ENCODE measurements at regions of chr2 and their contacts with region 1.

Region 1: DNA sequence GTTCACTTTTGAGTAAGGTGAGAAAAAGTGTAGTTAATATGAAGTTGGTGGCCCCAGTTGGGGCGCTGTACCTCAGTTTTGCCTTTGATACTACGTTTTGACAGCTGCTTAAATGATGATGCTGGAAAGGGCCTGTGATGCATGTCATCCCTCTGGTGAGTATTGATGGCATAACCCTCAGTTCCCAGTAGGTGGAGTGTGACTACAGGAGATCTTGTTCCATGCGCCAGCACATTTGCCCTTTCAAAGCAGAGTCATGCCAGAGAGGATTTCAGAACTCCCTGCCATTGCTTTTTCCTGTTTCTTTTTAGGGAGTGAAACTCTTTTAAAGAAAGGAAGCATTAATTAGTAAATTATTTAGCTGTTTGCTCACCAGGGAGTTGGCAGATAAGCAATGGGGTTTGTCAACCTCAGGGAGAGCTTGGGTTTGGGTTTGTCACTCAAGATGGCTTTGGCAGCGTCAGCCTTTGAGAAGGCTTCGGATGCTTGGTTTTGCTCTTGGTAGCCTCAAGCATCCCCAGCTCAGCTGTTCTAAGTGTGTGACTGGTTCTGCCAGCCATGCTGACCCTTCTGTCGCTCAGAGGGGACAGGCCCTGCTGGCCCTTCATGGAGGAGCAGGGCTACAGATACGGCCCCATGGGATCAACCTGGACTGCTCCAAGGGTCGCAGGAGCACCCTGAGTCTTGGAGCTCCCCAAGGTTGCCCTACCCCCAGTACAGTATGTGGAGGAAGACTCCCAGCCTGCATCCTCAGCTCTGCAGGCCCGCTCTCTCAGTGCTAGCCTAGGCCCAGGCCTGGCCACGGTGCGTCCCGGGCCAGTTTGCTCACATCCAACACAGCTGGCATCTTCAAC is 29.1 kb downstream of the ARMC9 start:
- DNase-seq: peak in 1 of 2 experiments; percentile 29
- H3K4me3 ChIP-seq: no peak overlapping the region
- H3K27ac ChIP-seq: no peak overlapping the region
- H3K4me1 ChIP-seq: peaks cover 0 to 7% (median 4%) of the 10 kb centered on the region in 4 experiments
- H3K27me3 ChIP-seq: no peaks in the 10 kb centered on the region
- CTCF ChIP-seq: peak; percentile 65 to 91 (median 89)
- EP300 ChIP-seq: no peak
- POLR2A ChIP-seq: no peak
- RAD21 ChIP-seq: peak; percentile 95 to 96

Region 2: DNA sequence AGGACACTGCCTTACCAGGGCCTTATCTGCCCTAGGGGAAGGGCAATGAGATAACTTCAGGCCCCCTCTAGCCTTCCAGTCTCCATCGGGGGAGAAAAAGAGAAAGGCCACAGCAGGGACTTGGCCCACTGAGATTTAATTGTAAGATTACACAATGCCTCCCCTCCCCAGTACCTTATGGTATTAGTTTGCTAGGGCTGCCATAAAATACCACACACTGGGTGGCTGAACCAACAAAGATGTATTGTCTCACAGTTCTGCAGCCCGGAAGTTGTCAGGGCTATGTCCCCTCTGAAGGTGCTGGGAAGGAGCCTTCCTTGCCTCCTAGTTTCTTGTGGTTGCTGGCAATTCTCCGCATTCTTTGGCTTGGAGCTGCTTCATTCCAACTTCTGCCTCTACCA is 266.4 kb before region 1 on chr2:
- CTCF ChIA-PET with region 1: no interaction called
- POLR2A ChIA-PET with region 1: no interaction called
- DNase-seq: no peak
- H3K4me3 ChIP-seq: no peak overlapping the region
- H3K27ac ChIP-seq: no peak overlapping the region
- H3K4me1 ChIP-seq: peaks cover 0 to 3% (median under 1%) of the 10 kb centered on the region in 4 experiments; a peak in 3 of 7 replicates
- H3K27me3 ChIP-seq: peaks cover 0 to 5% (median 2%) of the 10 kb centered on the region in 4 experiments; a peak in 4 of 7 replicates
- CTCF ChIP-seq: no peak
- EP300 ChIP-seq: no peak
- POLR2A ChIP-seq: no peak
- RAD21 ChIP-seq: no peak

Region 3: DNA sequence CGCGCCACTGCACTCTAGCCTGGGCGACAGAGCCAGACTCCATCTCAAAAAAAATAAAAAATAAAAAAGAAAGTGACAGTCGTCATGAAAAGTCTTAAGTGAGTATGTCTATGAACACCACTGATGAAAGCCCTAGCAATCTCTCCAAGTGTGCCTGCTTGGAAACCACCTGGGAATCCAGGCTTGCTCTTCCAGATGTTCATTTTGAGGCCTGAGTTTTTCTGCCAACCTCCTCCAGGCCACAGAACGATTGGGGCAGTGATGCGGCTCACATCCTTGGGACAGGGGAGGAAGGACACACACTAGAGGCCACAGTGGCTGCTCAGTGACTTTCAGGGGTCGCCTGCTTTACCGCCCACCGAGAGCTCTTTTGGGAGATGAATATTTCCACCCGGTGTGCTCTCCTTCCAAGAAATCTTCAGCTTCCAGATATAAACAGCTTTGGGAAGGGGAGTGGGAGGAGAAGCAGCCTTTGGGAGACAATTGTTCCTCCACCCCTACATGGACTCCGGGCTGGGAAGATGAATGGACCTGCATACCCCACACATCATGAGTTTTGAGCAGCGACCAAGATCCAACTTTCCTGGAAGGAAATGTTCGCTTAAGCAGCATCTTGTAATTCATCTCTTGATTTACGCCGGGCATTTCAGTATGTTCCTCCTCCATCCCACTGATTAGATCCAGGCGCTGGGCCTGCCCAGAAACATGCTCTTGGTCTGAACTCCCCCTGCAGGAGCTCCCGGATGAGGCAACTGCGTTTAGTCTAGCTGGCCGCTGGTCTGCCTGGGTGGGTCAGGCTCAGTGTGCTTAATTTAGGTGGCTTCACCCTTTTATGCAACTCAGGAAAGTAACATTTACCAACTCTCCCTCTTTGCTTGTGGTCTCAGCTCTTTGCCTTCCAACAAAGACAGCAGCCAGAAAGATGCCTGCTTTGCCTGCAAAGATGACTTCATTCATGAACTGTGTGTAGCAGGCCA is 35.4 kb before region 1 on chr2:
- CTCF ChIA-PET with region 1: interaction called, 11 read pairs
- POLR2A ChIA-PET with region 1: no interaction called
- DNase-seq: peak; percentile 64 to 79
- H3K4me3 ChIP-seq: no peak overlapping the region
- H3K27ac ChIP-seq: no peak overlapping the region
- H3K4me1 ChIP-seq: peaks cover 0 to 16% (median 10%) of the 10 kb centered on the region in 4 experiments; a peak in 6 of 7 replicates
- H3K27me3 ChIP-seq: no peaks in the 10 kb centered on the region
- CTCF ChIP-seq: peak; percentile 75 to 85 (median 81)
- EP300 ChIP-seq: no peak
- POLR2A ChIP-seq: no peak
- RAD21 ChIP-seq: peak; percentile 72 to 80

Region 4: DNA sequence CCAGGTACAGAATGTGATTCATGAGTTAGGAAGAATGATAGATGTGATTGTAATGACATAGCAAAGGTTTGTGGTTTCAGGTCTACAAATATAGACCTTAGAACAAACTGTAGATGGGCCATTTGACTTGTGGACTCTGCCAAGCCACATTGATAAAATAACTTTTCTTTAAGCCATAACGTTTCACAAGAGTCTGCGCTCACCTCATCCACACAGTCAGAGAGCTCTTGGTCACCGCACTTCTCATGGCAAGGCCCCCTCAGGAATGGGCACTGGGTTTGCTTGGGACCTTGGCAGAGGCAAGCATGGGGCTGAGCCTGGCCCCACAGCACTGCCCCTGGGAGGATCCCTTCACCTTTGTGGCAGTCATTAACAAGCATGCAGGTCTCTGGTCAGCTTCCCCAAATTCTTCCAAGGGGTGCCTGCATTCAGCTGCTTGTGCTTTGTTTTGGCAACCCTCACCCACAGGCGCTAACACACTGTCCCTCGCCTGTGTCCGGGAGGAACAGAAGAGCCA is 15.1 kb before region 1 on chr2:
- CTCF ChIA-PET with region 1: interaction called, 10 read pairs
- POLR2A ChIA-PET with region 1: no interaction called
- DNase-seq: no peak
- H3K4me3 ChIP-seq: no peak overlapping the region
- H3K27ac ChIP-seq: no peak overlapping the region
- H3K4me1 ChIP-seq: no peaks in the 10 kb centered on the region
- H3K27me3 ChIP-seq: no peaks in the 10 kb centered on the region
- CTCF ChIP-seq: no peak
- EP300 ChIP-seq: no peak
- POLR2A ChIP-seq: no peak
- RAD21 ChIP-seq: no peak

Region 5: GRCh38 chr2:231245253-231246094 is 17.9 kb after region 1 on chr2:
- CTCF ChIA-PET with region 1: interaction called, 78 read pairs
- POLR2A ChIA-PET with region 1: interaction called, 3 read pairs
- DNase-seq: no peak
- H3K4me3 ChIP-seq: no peak overlapping the region
- H3K27ac ChIP-seq: no peak overlapping the region
- H3K4me1 ChIP-seq: peaks cover 0 to 3% (median 0%) of the 10 kb centered on the region in 4 experiments; a peak in 2 of 7 replicates
- H3K27me3 ChIP-seq: no peaks in the 10 kb centered on the region
- CTCF ChIP-seq: peak in 2 of 3 experiments; percentile 8 to 21; a peak in 2 of 4 replicates
- EP300 ChIP-seq: no peak
- POLR2A ChIP-seq: no peak
- RAD21 ChIP-seq: peak in 1 of 2 experiments; percentile 17; a peak in 1 of 4 replicates

Region 6: DNA sequence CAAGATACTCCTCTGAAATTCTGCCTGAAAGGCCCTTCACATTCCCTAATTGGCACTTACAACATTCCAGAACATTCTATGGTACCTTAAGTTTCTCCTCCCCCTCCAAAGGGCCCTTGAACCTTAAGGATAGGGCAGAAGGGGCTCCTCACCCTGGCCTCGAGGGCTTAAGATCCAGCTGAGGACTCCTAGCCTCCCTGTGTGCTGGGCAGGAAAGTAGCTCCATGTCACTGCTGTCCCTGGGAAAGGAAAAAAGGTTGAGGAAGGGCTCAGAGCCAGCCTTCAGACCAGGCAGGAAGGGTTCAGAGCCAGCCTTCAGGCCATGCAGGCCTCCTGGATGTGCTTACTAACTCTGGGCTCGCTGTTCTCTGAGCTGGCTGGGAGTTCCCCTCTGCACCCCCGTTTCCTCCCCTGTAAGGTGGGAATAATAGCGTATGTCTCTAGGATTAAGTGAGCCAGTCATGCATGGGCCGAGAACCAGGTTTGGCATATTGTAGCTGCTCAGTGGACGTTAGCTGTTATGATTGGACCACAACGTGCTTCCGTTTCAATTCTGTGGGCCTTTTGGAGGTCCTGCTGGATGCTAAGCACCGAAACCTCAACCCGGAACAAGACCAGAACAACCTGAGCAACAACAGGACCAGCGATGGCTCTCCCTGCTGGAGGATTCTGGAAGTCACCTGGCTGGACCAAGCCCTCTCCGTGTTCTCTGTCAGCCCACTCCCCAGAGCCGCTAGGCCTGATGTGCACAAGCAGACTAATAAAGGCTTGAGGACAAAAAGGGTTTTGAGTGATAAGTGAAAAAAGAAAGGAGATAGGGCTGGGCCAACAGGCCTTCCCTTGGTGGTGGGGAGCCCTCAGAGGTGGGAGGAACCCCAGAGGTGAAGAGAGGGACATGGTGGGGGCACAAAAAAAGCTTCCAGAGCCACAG is 166.9 kb after region 1 on chr2:
- CTCF ChIA-PET with region 1: interaction called, 218 read pairs
- POLR2A ChIA-PET with region 1: no interaction called
- DNase-seq: peak in 1 of 2 experiments; percentile 78
- H3K4me3 ChIP-seq: peak overlapping the region in 2 of 4 experiments; percentile 46 to 74; a peak in 5 of 8 replicates
- H3K27ac ChIP-seq: no peak overlapping the region
- H3K4me1 ChIP-seq: peaks cover 3 to 37% (median 20%) of the 10 kb centered on the region in 4 experiments
- H3K27me3 ChIP-seq: no peaks in the 10 kb centered on the region
- CTCF ChIP-seq: peak in 2 of 3 experiments; percentile 67 to 78; a peak in 3 of 4 replicates
- EP300 ChIP-seq: no peak
- POLR2A ChIP-seq: no peak
- RAD21 ChIP-seq: peak; percentile 58 to 75

Region 7: GRCh38 chr2:231452799-231453508 is 225.4 kb after region 1 on chr2:
- CTCF ChIA-PET with region 1: interaction called, 26 read pairs
- POLR2A ChIA-PET with region 1: interaction called, 23 read pairs
- DNase-seq: peak in 1 of 2 experiments; percentile 65
- H3K4me3 ChIP-seq: no peak overlapping the region
- H3K27ac ChIP-seq: peak overlapping the region; percentile 44; the same call in 1 of the 2 replicates
- H3K4me1 ChIP-seq: peaks cover 0 to 5% (median 2%) of the 10 kb centered on the region in 4 experiments; a peak in 3 of 7 replicates
- H3K27me3 ChIP-seq: no peaks in the 10 kb centered on the region
- CTCF ChIP-seq: no peak
- EP300 ChIP-seq: no peak
- POLR2A ChIP-seq: peak; percentile 52 to 83; a peak in 2 of 3 replicates
- RAD21 ChIP-seq: no peak

Measured in H1 (cell line).